ENCODE measurements at regions of chr19 and their contacts with region 1.

Region 1: DNA sequence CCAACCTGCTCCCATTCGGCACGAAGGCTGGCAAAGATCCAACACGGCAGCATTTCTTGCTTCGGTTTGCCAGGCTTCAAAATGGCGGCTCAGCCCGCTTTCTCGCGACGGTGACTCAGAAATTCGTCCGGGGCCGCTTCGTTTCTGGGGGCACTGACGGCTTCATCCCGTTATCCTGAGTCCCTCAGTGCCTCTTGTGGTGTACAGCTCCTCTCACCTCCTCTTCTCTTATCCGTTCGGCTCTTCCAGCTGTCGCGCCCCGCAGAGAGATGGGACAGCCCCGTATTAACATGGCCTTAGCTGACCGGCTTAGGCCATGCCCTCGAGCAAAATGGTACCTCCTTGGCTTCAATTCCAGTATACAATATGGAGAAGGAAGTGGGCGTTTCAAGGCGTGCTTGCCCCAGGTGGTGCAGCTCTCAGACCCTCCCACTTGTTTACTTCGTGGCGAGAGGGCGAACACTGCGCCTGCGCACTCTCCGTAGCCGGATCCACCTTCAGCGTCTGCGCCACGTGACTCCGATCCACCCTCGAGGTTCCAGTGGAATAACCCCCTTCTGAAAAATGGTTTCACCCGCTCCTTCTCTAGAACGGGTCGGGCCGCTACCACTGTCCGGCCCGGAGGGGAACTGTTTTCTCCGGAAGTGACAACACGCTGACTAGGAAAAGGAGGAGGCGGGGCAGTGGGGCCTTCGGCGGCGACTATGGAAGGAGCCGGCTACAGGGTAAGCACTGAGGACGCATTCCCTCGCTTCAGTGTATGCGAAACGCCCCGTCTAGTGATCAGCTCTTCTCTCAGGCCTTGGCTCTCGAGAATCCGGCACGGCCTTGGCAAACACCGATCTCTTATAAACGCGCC is at the starts of genes AKT1S1 and TBC1D17:
- DNase-seq: peak; percentile 93 to 100
- ATAC-seq: peak; percentile 64 to 87 (median 68)
- H3K4me3 ChIP-seq: peak within 1 kb of the TSS; percentile 57
- H3K4me3 Mint-ChIP-seq: no peak within 1 kb of the TSS
- H3K27ac ChIP-seq: peak within 1 kb of the TSS; percentile 99
- H3K27ac Mint-ChIP-seq: no peak within 1 kb of the TSS
- H3K4me1 ChIP-seq: peaks cover 22% of the 10 kb centered on the region
- H3K4me1 Mint-ChIP-seq: peaks cover 22 to 26% of the 10 kb centered on the region in 2 donors
- H3K27me3 ChIP-seq: no peaks in the 10 kb centered on the region
- H3K27me3 Mint-ChIP-seq: no peaks in the 10 kb centered on the region
- CTCF ChIP-seq: no peak
- total RNA-seq, gene AKT1S1: 12.8 to 17.8 (median 16.1) TPM
- total RNA-seq, gene TBC1D17: 45.8 to 59.7 (median 54.4) TPM

Region 2: GRCh38 chr19:49487277-49488045 is 389.8 kb before region 1 on chr19 and contains the start of gene RPL13A:
- intact Hi-C with region 1: loop called (anchors 5 kb)
- DNase-seq: peak; percentile 99 to 100
- ATAC-seq: peak; percentile 90 to 98 (median 94)
- H3K4me3 ChIP-seq: peak within 1 kb of the TSS; percentile 93
- H3K4me3 Mint-ChIP-seq: peak within 1 kb of the TSS; percentile 95
- H3K27ac ChIP-seq: peak within 1 kb of the TSS; percentile 85
- H3K27ac Mint-ChIP-seq: peak within 1 kb of the TSS; percentile 92 to 98
- H3K4me1 ChIP-seq: peaks cover 43% of the 10 kb centered on the region
- H3K4me1 Mint-ChIP-seq: peaks cover 25 to 29% of the 10 kb centered on the region in 2 donors
- H3K27me3 ChIP-seq: no peaks in the 10 kb centered on the region
- H3K27me3 Mint-ChIP-seq: no peaks in the 10 kb centered on the region
- CTCF ChIP-seq: no peak
- total RNA-seq, gene RPL13A: 1,881 to 2,284 (median 2,283) TPM

Region 3: DNA sequence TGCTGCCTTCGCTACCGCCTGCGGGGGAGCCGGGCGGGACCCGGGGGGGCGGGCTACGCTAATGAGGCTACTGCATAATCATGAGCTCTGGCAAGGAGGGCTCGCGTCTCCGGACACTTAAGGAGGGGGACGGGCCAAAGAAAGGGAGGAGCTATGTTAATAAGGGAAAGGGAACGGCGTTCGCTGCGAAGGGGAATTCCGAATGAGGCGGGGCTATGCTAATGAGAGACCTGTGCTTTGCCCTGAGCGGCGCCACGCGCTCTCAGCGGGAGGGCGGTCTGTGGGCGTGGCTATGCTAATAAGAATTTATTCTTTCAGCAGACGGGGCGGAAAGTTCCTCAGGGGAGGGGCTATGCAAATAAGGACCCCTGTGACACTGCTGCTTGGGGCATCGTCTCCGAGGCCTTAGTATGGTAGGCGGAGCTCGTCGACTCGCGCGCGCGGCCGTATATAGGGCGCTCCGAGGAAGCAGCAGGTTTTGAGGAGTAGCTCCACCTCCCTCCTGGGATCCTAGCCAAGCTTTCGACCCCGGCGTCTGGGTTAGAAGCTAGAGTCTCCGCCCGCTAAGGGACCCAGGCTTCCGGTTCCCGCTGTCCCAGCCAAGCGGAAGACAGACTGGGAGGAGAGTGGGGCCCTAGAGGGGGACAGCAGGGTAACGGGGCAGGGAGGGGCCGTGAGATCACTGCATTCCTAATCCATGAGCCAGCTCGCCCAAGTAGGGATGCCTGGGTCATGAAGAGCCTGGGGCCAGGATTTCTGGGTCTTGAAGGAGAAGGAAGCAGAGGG is 236.9 kb before region 1 on chr19 and contains the start of gene RRAS:
- intact Hi-C with region 1: loop called (anchors 2 kb)
- DNase-seq: peak; percentile 99 to 100
- ATAC-seq: peak; percentile 71 to 87 (median 73)
- H3K4me3 ChIP-seq: peak within 1 kb of the TSS; percentile 58
- H3K4me3 Mint-ChIP-seq: peak within 1 kb of the TSS; percentile 93
- H3K27ac ChIP-seq: peak within 1 kb of the TSS; percentile 86
- H3K27ac Mint-ChIP-seq: peak within 1 kb of the TSS; percentile 96 to 100
- H3K4me1 ChIP-seq: peaks cover 44% of the 10 kb centered on the region
- H3K4me1 Mint-ChIP-seq: peaks cover 45 to 63% of the 10 kb centered on the region in 2 donors
- H3K27me3 ChIP-seq: no peaks in the 10 kb centered on the region
- H3K27me3 Mint-ChIP-seq: no peaks in the 10 kb centered on the region
- CTCF ChIP-seq: no peak
- total RNA-seq, gene RRAS: 2.0 to 7.7 (median 5.9) TPM

Region 4: GRCh38 chr19:49896863-49897621 is 19.8 kb after region 1 on chr19 and contains the start of gene IL4I1:
- intact Hi-C with region 1: loop called (anchors 2 kb)
- DNase-seq: peak; percentile 59 to 90
- ATAC-seq: peak; percentile 70 to 80 (median 76)
- H3K4me3 ChIP-seq: peak within 1 kb of the TSS; percentile 20
- H3K4me3 Mint-ChIP-seq: peak within 1 kb of the TSS; percentile 80
- H3K27ac ChIP-seq: peak within 1 kb of the TSS; percentile 96
- H3K27ac Mint-ChIP-seq: peak within 1 kb of the TSS; percentile 87 to 97
- H3K4me1 ChIP-seq: peaks cover 43% of the 10 kb centered on the region
- H3K4me1 Mint-ChIP-seq: peaks cover 19 to 20% of the 10 kb centered on the region in 2 donors
- H3K27me3 ChIP-seq: no peaks in the 10 kb centered on the region
- H3K27me3 Mint-ChIP-seq: no peaks in the 10 kb centered on the region
- CTCF ChIP-seq: no peak
- total RNA-seq, gene IL4I1: 3.0 to 3.8 (median 3.4) TPM

Region 5: DNA sequence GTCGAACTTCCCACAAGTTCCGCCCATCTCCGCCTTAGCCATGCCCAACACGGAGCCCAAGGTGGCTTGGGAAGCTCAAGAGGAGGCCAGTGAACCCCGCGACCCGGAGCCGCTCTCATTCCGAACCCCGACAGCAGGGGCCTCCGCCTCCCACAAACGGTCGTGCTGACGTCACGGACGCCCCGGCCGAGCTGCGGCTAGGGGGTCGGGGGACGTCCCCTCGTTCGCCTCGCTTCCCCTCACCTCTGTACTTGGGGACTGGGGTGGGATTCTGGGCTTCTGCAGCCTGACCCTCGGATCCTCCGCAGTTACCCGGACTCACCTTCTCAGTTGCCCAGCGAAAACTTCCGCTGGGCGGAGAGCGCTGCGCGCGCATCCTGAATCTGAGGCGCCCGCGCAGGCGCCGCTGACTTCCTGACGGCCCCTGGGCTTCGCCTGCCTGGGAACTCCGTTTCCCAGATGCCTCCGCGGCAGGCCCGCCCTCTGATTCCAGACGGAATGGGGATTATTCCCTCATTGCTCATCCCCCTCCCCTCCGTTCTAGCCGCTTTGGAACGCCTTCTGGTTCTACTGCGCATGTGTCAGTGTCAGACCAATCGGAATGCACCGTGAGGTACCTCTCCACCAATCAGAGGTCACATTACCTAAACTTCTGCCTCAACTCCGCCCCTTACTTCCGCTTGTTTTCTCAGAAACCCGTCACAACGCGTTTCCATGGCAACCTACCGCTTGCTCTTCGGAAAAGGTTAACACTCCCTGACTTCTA is 148.0 kb after region 1 on chr19 and contains the start of gene VRK3:
- intact Hi-C with region 1: loop called (anchors 1 kb)
- DNase-seq: peak; percentile 94 to 100
- ATAC-seq: peak; percentile 84 to 91 (median 84)
- H3K4me3 ChIP-seq: peak within 1 kb of the TSS; percentile 82
- H3K4me3 Mint-ChIP-seq: peak within 1 kb of the TSS; percentile 99
- H3K27ac ChIP-seq: peak within 1 kb of the TSS; percentile 95
- H3K27ac Mint-ChIP-seq: peak within 1 kb of the TSS; percentile 98 to 100
- H3K4me1 ChIP-seq: peaks cover 32% of the 10 kb centered on the region
- H3K4me1 Mint-ChIP-seq: peaks cover 33 to 63% of the 10 kb centered on the region in 2 donors
- H3K27me3 ChIP-seq: no peaks in the 10 kb centered on the region
- H3K27me3 Mint-ChIP-seq: no peaks in the 10 kb centered on the region
- CTCF ChIP-seq: peak; percentile 23
- total RNA-seq, gene VRK3: 82.7 to 105 (median 93.7) TPM

Region 6: GRCh38 chr19:50230379-50231351 is 353.4 kb after region 1 on chr19:
- intact Hi-C with region 1: no loop called
- DNase-seq: no peak
- ATAC-seq: peak in 1 of 3 donors; percentile 28
- H3K4me3 ChIP-seq: no peak overlapping the region
- H3K4me3 Mint-ChIP-seq: no peak overlapping the region
- H3K27ac ChIP-seq: no peak overlapping the region
- H3K27ac Mint-ChIP-seq: no peak overlapping the region
- H3K4me1 ChIP-seq: no peaks in the 10 kb centered on the region
- H3K4me1 Mint-ChIP-seq: no peaks in the 10 kb centered on the region
- H3K27me3 ChIP-seq: no peaks in the 10 kb centered on the region
- H3K27me3 Mint-ChIP-seq: peaks cover 0 to 10% of the 10 kb centered on the region in 2 donors
- CTCF ChIP-seq: no peak

Measured in natural killer cell (primary cell).